Heart left ventricle (tissue), 16 donors: ENCODE measurements at regions of chr4 and their contacts with region 1.

Region 1: GRCh38 chr4:48546336-48546735 is 56.3 kb downstream of the ZAR1 start:
- DNase-seq: no peak
- ATAC-seq: no peak
- H3K4me3 ChIP-seq: no peak overlapping the region
- H3K27ac ChIP-seq: no peak overlapping the region
- H3K4me1 ChIP-seq: no peaks in the 10 kb centered on the region
- H3K27me3 ChIP-seq: no peaks in the 10 kb centered on the region
- CTCF ChIP-seq: peak; percentile 25 to 71 (median 48)
- POLR2A ChIP-seq: no peak

Region 2: DNA sequence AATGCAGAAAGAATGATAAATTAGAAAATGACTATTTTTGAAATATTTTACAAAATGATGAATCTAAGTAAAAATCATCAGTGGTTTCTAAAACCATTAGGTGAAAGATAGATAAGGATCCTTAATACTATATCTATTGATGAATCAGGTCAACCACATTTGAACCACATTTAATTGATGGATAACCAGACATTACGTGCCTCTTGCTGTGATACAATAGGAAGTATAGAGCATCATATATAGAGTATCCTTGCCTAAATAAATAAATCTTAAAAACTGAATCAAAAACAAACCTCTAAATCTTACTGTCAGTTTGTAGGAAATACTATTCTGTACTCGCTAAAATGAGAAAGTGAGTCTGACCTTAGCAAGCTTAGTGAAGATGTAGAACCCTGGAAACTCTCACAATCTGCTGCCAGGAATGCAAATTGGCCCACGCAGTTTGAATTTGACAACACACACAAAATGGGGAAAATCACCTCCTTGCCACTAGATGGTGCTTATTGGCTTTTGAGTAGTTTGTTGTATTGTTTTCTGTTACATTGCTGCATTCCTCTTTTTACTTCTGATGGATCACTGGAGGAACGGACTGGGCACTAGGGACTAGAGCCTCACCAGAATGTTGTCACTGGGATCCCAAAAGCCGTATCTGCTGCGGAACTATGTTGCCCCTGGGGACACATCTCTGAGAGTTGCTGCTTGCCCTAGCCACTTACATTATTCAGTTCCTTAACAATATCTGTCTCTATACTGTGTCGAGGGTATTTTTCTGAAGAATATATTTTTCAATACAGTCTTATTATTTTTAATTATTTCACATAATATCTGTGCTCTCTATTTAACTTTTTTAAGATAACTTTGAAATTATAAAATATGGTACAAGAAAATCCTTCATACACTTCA is 230.4 kb before region 1 on chr4:
- intact Hi-C with region 1: loop called in 1 of 10 experiments (anchors 10 kb)
- DNase-seq: no peak
- ATAC-seq: peak in 1 of 4 donors; percentile 46
- H3K4me3 ChIP-seq: no peak overlapping the region
- H3K27ac ChIP-seq: no peak overlapping the region
- H3K4me1 ChIP-seq: no peaks in the 10 kb centered on the region
- H3K27me3 ChIP-seq: no peaks in the 10 kb centered on the region
- CTCF ChIP-seq: peak; percentile 33 to 70 (median 50)
- POLR2A ChIP-seq: no peak

Region 3: DNA sequence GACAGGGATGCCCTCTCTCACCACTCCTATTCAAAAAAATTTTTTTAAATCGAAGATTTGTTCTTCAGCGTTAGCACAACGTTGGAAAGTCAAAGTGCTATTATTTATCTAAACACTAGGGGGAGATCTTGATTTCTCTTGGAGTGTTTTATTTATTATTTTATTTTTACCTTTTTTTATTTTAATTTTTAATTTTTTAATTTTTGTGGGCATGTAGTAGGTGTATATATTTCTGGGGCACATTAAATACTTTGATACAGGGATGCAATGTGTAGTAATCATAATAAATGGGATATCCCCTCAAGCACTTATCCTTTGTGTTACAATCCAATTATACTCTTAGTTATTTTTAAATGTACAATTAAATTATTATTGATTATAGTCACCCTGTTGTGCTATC is 100.6 kb before region 1 on chr4:
- intact Hi-C with region 1: loop called in 1 of 10 experiments (anchors 5 kb)
- DNase-seq: no peak
- ATAC-seq: no peak
- H3K4me3 ChIP-seq: no peak overlapping the region
- H3K27ac ChIP-seq: no peak overlapping the region
- H3K4me1 ChIP-seq: peaks cover 0 to 4% (median 0%) of the 10 kb centered on the region in 12 donors
- H3K27me3 ChIP-seq: no peaks in the 10 kb centered on the region
- CTCF ChIP-seq: peak; percentile 45 to 73 (median 62)
- POLR2A ChIP-seq: no peak

Region 4: GRCh38 chr4:48490012-48490679 is 56.2 kb before region 1 on chr4 and contains the start of gene ZAR1:
- intact Hi-C with region 1: no loop called
- DNase-seq: peak in 1 of 5 donors; percentile 60
- ATAC-seq: peak in 2 of 4 donors; percentile 51 to 66
- H3K4me3 ChIP-seq: peak within 1 kb of the TSS; percentile 1 to 52 (median 44)
- H3K27ac ChIP-seq: no peak within 1 kb of the TSS
- H3K4me1 ChIP-seq: peaks cover 0 to 17% (median 2%) of the 10 kb centered on the region in 12 donors
- H3K27me3 ChIP-seq: peaks cover 17 to 71% (median 47%) of the 10 kb centered on the region in 9 donors
- CTCF ChIP-seq: no peak
- POLR2A ChIP-seq: no peak
- total RNA-seq, gene ZAR1: not detected

Region 5: DNA sequence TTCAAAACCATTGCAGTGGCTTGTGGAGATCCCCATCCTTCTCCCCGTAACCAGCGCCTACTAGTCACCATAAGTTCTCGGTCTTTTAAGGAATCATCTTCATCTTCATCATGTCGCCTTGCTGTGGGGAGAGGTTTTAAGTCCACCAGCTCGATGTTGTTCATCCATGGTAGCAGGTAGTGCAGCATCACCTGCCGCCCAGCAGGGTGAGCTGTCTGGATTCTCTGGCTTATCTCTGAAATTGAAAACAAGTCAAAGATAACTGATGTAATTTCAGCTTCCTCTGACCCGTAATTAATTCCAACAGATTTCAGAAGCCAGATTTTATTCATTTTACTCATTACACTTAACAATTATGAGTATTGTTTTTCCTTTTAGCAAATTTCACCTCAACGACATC is 11.1 kb after region 1 on chr4:
- intact Hi-C with region 1: loop called in 1 of 10 experiments (anchors 1 kb)
- DNase-seq: no peak
- ATAC-seq: no peak
- H3K4me3 ChIP-seq: no peak overlapping the region
- H3K27ac ChIP-seq: no peak overlapping the region
- H3K4me1 ChIP-seq: no peaks in the 10 kb centered on the region
- H3K27me3 ChIP-seq: no peaks in the 10 kb centered on the region
- CTCF ChIP-seq: peak in 1 of 12 donors; percentile 7
- POLR2A ChIP-seq: no peak